Activated T-helper 1 cell treated with anti-CD3 and anti-CD28 coated beads, Interleukin-12 subunit alpha, Interleukin-12 subunit beta, Interleukin-2, Interleukin-4 antibody, amounts not matched to agents 30 ng/mL and 10 ng/mL and 1 ng/mL, durations not matched to agents 14 hours and 24 hours and 36 hours (primary cell): ENCODE measurements at regions of chr1 and their contacts with region 1.

Region 1: DNA sequence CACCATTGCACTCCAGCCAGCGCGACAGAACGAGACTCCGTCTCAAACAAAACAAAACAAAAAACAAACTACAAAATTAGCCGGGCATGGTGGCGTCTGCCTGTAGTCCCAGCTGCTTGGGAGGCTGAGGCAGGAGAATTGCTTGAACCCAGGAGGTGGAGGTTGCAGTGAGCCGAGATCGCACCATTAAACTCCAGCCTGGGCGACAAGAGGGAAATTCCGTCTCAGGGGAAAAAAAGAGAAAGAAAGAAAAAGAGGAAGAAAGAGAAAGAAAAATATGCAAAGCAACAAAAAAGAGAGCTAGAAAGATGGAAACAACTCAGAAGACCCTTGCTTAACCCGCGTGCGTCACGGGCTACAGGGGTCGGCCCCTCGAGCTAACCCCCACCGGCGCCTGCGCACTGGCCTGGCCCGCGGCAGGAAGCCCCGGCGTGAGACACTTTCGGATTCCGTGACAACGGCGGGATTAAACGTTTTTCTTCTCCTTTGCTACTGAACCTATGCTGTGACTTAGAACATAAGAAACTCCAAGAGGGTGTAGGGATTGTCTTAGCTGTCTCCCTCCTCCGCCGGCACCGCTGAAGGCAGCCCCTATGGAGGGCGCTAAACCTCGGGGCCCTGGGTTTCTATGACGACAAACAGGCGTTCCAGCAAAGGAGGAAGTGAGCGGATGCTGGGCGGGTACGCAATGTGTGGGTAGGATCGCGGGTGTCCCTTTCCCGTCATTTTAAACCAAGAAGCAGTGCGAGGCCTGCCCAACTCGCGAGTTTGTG is at the start of gene AXDND1:
- DNase-seq: peak; percentile 87
- H3K4me3 Mint-ChIP-seq: peak within 1 kb of the TSS; percentile 95
- H3K27ac Mint-ChIP-seq: peak within 1 kb of the TSS; percentile 100
- H3K4me1 Mint-ChIP-seq: peaks cover 12% of the 10 kb centered on the region
- H3K27me3 Mint-ChIP-seq: no peaks in the 10 kb centered on the region
- total RNA-seq, gene AXDND1: not detected in 2 replicates

Region 2: GRCh38 chr1:178542560-178543356 is 822.7 kb before region 1 on chr1:
- intact Hi-C with region 1: loop called (anchors 1 kb)
- DNase-seq: peak; percentile 81
- H3K4me3 Mint-ChIP-seq: peak overlapping the region; percentile 88
- H3K27ac Mint-ChIP-seq: peak overlapping the region; percentile 80
- H3K4me1 Mint-ChIP-seq: no peaks in the 10 kb centered on the region
- H3K27me3 Mint-ChIP-seq: no peaks in the 10 kb centered on the region

Region 3: DNA sequence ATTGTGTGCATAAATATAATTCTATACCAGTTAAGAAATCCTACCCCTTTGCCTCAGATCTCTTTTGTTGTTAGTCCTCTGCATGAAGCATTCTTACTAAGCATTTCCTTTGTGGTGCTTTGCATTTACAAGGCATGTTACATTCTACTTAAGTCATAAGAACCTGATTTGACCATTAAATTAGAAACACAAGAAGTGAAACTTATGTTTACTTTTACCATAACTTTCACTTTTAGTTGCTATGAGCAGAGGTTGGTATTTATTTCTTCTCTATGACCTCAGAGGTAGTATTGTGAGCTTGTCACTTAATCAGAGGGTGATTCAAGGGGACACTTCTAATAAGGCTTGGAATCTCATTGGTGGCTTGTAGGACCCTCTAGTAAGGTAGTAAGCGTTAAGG is 330.8 kb before region 1 on chr1:
- intact Hi-C with region 1: loop called (anchors 1 kb)
- DNase-seq: no peak
- H3K4me3 Mint-ChIP-seq: no peak overlapping the region
- H3K27ac Mint-ChIP-seq: peak overlapping the region; percentile 82
- H3K4me1 Mint-ChIP-seq: peaks cover 80% of the 10 kb centered on the region
- H3K27me3 Mint-ChIP-seq: no peaks in the 10 kb centered on the region

Region 4: GRCh38 chr1:179129702-179130473 is 235.6 kb before region 1 on chr1:
- intact Hi-C with region 1: loop called (anchors 1 kb)
- DNase-seq: no peak
- H3K4me3 Mint-ChIP-seq: peak overlapping the region; percentile 64
- H3K27ac Mint-ChIP-seq: peak overlapping the region; percentile 88
- H3K4me1 Mint-ChIP-seq: peaks cover 18% of the 10 kb centered on the region
- H3K27me3 Mint-ChIP-seq: no peaks in the 10 kb centered on the region

Region 5: DNA sequence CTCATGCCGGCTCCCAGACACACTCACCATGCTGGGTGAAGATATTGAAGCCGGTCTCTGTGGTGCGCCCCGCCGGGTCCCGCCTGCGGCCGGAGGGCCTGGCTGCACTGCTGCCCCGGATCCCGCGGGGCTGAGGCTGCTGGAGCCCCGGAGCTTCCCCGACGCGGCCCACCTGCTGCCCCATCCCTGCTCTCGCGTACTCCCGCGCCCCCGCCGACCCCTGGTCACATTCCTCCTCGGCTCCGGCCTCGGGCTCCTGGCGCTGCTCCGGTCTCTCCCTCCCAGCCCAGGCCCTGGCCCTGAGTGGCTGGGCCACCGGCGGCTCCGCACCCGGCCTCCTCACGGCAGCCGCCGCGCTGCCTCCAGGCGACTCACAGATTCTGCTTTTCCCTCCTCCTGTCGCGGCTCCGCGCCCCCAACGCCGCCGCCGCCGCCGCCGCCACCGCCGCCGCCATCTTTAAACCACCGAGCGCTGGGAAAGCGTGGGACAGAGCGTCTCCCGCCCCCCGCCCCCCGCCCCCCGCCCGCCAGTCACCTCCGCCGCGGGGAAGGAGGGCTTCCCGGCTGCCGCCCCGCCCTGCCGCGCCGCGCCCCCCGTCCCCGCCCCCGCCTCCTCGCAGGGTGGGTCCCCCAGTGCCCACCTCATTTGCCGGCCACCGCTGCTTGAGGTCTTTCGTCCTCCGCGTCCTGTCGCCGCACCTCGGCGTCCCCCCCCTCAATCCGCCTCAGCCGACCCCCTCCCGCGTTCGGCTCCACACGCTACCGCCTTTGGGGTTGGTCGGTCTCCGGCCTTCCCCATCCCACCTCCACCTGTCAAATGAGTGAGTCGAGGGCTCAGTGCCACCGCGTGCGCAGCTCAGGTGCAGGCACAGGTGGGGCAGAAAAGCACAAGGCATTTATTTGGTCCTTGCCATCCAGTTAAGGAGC is 136.0 kb before region 1 on chr1 and contains the start of gene ABL2:
- intact Hi-C with region 1: loop called (anchors 1 kb)
- DNase-seq: peak; percentile 47
- H3K4me3 Mint-ChIP-seq: peak within 1 kb of the TSS; percentile 88
- H3K27ac Mint-ChIP-seq: peak within 1 kb of the TSS; percentile 80
- H3K4me1 Mint-ChIP-seq: peaks cover 31% of the 10 kb centered on the region
- H3K27me3 Mint-ChIP-seq: no peaks in the 10 kb centered on the region
- total RNA-seq, gene ABL2: 9.5 and 11.4 TPM in 2 replicates

Region 6: DNA sequence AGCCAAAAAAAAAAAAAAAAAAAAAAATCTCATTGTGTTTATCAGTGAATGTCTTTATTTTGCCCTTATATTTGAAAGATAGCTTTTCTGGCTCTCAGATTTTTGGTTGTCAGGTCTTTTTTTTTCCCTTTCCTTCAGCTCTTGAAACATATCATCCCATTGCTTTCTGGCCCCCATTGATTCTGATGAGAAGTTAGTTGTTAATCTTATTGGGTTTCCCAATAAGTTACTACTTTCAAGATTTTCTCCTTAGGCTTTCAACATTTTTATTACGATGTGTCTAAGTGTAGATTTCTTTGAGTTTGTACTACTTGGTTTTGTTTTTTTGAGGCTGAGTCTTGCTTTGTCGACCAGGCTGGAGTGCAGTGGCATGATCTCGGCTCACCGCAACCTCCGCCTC is 86.6 kb before region 1 on chr1:
- intact Hi-C with region 1: no loop called
- DNase-seq: no peak
- H3K4me3 Mint-ChIP-seq: no peak overlapping the region
- H3K27ac Mint-ChIP-seq: no peak overlapping the region
- H3K4me1 Mint-ChIP-seq: no peaks in the 10 kb centered on the region
- H3K27me3 Mint-ChIP-seq: peaks cover 7% of the 10 kb centered on the region

Region 7: DNA sequence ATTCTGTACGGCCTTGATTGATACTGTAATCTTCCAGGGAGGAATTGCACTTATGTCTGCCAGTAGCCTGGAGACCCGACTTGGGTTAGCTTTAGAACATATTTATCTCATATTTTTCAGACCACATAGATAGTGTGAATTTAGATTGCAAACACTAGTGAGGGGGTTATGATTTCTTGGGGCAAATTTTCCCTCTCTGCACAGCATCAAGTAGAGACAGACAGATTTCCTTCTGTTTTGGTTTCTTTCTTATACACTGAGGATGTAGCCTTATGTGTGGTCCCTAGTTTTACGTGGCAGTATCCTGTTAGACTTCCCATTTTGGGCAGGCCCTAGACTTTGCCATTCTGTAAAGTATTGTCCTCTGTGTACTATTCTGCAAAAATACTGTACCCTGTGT is 42.9 kb before region 1 on chr1:
- intact Hi-C with region 1: loop called (anchors 1 kb)
- DNase-seq: no peak
- H3K4me3 Mint-ChIP-seq: no peak overlapping the region
- H3K27ac Mint-ChIP-seq: no peak overlapping the region
- H3K4me1 Mint-ChIP-seq: peaks cover 28% of the 10 kb centered on the region
- H3K27me3 Mint-ChIP-seq: no peaks in the 10 kb centered on the region

Region 8: GRCh38 chr1:179954493-179955297 is 589.2 kb after region 1 on chr1 and contains the start of gene CEP350:
- intact Hi-C with region 1: loop called (anchors 10 kb)
- DNase-seq: peak; percentile 96
- H3K4me3 Mint-ChIP-seq: peak within 1 kb of the TSS; percentile 94
- H3K27ac Mint-ChIP-seq: peak within 1 kb of the TSS; percentile 94
- H3K4me1 Mint-ChIP-seq: peaks cover 50% of the 10 kb centered on the region
- H3K27me3 Mint-ChIP-seq: no peaks in the 10 kb centered on the region
- total RNA-seq, gene CEP350: 44.6 and 51.6 TPM in 2 replicates

Region 9: DNA sequence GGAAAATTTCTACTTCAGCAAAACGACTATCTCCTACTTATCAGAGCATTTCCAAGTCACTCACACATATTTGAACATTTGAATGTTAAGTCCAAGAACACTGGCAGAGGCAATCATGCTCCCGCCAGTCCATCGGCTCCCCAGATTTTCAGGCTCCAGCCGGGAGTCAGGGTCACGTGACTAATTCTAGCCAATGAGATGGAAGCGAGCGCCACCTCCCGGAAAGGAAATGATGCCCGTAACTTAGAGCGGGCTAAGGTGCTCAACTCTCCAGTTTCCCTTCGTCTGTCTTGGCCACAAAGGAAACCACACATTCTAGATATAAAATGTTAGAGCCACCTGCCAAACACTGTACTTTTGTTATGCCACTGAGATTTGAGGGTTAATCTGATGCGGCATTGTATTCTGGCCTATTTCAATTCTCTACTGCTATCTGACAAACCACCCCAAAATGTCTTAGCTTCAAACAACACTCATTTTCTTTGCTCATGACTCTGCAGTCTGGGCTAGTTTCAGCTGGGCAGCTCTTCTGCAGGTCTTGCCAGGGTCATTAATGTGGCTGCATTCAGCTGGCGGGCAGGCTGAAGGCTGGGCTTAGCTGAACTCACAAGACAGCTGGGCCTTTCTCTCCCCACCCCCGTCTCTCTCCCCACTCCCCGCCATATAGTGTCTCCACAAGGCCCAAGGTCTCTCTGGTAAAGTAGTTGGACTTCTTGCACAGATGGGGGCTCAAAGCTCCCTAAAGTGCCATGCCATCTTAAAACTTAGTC is 848.1 kb after region 1 on chr1:
- intact Hi-C with region 1: no loop called
- DNase-seq: peak; percentile 31
- H3K4me3 Mint-ChIP-seq: peak overlapping the region; percentile 25
- H3K27ac Mint-ChIP-seq: no peak overlapping the region
- H3K4me1 Mint-ChIP-seq: peaks cover 12% of the 10 kb centered on the region
- H3K27me3 Mint-ChIP-seq: peaks cover 9% of the 10 kb centered on the region